ENCODE measurements at regions of chr1 and their contacts with region 1.

Region 1: DNA sequence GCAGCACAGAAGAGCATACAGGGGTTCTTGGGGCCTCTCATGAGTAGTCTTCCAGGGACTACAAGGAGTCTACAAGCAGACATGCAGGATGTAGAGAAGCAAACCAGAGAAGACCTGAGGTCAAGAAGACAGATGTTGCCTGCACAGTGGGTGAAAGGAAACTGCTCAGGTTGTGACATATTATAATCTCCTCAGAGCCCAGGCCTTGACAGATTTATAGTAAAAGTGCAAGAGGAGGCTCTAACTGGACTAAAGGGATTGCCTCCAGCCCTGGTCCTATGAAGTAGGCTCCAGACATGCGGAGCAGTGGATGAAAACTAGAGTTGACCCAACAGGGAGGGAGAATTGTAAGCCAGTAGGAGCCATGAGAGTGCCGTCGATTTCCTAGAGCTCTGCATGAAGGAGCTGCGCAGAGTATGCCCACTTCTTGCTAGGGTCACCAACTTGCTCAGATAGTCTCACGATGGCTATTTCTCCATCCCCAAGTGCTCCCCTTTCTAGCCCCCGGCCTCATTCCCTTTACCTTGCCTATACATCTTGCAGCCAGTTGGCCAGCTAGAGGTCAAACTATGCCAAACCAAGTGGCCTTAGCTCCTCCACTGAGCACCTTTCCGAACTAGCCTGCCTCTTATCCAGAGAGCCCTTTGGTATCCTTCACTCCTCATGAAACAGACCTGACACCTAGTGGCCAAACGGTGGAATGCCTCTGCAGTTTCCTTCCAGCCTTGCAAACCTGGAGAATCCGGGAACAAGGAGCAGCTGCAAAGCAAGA is 36.2 kb upstream of the IPO9 start:
- H3K4me3 ChIP-seq: no peak overlapping the region
- H3K27ac ChIP-seq: no peak overlapping the region
- H3K4me1 ChIP-seq: no peaks in the 10 kb centered on the region
- CTCF ChIP-seq: peak; percentile 92

Region 2: DNA sequence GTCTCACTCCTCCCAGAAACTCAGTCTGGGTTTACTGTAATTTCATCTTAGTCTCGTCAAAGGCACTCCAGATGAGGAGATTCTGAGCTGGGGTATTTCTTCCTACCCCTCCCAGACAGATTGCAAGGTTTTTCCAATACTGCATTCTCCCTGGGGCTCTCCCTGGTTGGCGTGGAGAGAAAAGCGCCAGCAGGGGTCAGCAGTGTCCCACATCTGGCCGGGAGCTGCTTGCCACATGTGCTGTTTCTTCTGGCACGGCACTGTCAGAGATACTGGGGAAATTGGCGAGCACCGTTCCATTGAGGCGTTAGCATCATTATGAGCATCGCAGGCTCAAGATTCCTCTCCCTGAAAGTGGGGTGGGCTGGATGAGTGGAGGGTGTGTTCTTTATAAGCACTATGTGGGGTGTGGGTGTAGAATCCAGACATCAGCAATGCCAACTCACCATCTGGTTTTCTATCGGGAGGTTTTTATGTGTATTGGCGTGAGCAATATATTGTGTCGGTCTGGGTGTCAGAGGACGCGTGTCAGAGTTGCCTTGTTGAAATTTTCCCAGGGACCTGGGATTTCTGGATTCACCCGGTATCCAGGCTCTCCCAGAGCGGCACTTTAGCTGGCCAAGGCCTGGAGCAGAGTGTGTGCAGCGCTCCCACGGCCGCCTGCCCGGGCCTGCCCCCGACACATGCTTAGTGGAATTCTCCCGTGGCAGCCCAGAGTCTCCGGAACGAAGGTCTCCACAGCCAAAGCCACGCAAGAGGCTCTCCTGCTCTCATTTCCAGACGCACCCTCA is 261.8 kb before region 1 on chr1:
- CTCF ChIA-PET with region 1: interaction called, 52 read pairs
- POLR2A ChIA-PET with region 1: no interaction called
- H3K4me3 ChIP-seq: no peak overlapping the region
- H3K27ac ChIP-seq: no peak overlapping the region
- H3K4me1 ChIP-seq: peaks cover 4% of the 10 kb centered on the region; the same call in 1 of the 2 replicates
- CTCF ChIP-seq: peak; percentile 87

Region 3: DNA sequence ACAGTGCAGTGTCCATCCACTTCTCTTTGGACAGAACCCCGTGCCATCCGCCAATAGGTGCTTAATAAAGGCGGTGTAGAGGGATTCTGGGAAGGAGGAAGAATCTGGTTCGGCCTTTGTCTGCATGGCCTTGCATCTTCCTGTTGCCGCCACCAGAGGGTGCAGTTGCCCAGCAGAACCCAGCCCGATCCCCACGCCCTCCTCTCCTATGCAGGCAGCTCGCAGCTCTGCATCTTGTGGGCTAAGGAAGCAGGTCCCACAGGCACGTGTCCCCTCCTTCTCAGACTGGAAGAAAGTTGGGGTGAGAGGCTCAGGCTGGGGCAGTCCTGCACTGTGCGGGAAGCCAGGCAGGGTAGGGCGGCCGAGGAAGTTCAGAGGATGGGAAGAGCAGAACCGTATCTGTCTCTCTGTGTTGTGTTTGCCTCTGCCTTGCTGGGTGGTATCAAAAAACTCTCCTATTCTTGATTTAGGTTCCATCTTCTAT is 233.0 kb before region 1 on chr1:
- CTCF ChIA-PET with region 1: interaction called, 120 read pairs
- POLR2A ChIA-PET with region 1: no interaction called
- H3K4me3 ChIP-seq: no peak overlapping the region
- H3K27ac ChIP-seq: no peak overlapping the region
- H3K4me1 ChIP-seq: no peaks in the 10 kb centered on the region
- CTCF ChIP-seq: peak; percentile 99

Region 4: DNA sequence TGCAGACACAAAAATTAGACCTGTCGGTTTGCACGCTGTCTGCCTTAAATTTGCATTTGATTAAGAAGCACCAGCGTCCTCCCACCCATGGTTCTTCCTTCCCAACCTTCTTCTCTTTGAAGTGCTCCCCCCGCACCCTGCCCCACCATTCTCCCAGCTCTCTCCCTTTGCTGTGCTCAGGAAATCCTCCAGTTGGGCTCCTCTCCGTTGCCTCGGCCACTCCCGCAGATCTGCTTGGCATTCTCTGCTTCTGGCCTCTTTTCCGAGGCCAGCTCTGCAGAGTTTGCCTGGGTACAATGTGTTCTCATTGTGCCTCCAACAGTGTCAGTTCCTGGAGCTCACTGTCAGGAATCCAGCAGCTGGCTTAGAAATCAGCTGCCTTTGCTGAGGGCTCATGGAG is 127.7 kb before region 1 on chr1:
- CTCF ChIA-PET with region 1: no interaction called
- POLR2A ChIA-PET with region 1: no interaction called
- H3K4me3 ChIP-seq: no peak overlapping the region
- H3K27ac ChIP-seq: no peak overlapping the region
- H3K4me1 ChIP-seq: no peaks in the 10 kb centered on the region
- CTCF ChIP-seq: no peak

Region 5: GRCh38 chr1:201719812-201720521 is 72.8 kb before region 1 on chr1:
- CTCF ChIA-PET with region 1: interaction called, 593 read pairs
- POLR2A ChIA-PET with region 1: no interaction called
- H3K4me3 ChIP-seq: no peak overlapping the region
- H3K27ac ChIP-seq: peak overlapping the region; percentile 27; the same call in 1 of the 2 replicates
- H3K4me1 ChIP-seq: peaks cover 25% of the 10 kb centered on the region
- CTCF ChIP-seq: no peak

Region 6: GRCh38 chr1:201739492-201740085 is 53.1 kb before region 1 on chr1:
- CTCF ChIA-PET with region 1: interaction called, 17 read pairs
- POLR2A ChIA-PET with region 1: no interaction called
- H3K4me3 ChIP-seq: peak overlapping the region; percentile 67
- H3K27ac ChIP-seq: no peak overlapping the region; the same call in 1 of the 2 replicates
- H3K4me1 ChIP-seq: peaks cover 3% of the 10 kb centered on the region; the same call in 1 of the 2 replicates
- CTCF ChIP-seq: peak; percentile 21; the same call in 1 of the 2 replicates

Region 7: DNA sequence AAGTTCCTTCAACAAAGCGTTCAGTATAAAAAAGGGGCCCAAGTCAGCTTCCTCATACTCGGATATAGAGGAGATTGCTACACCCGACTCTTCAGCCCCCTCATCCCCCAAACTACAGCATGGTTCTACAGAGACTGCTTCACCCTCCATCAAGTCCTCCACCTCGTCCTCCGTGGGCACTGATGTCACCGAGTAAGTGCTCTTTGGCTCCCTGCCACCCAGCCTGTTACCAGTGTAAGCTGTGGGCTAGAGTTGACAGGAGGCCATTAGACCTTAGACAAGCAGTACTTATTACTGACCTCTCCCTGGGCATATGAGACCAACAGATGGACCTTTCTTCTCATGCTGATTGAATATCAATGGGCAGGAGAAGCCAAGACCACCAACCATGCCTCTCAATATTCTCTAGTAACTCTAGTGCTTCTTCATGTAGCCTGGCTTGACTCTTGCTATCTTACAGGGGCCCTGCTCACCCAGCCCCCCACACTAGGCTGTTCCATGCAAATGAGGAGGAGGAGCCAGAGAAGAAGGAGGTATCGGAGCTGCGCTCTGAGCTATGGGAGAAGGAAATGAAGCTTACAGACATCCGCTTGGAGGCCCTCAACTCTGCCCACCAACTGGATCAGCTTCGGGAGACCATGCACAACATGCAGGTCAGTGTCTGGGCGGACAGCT is 15.4 kb after region 1 on chr1:
- CTCF ChIA-PET with region 1: interaction called, 28 read pairs
- POLR2A ChIA-PET with region 1: no interaction called
- H3K4me3 ChIP-seq: no peak overlapping the region
- H3K27ac ChIP-seq: no peak overlapping the region
- H3K4me1 ChIP-seq: no peaks in the 10 kb centered on the region
- CTCF ChIP-seq: no peak

Region 8: DNA sequence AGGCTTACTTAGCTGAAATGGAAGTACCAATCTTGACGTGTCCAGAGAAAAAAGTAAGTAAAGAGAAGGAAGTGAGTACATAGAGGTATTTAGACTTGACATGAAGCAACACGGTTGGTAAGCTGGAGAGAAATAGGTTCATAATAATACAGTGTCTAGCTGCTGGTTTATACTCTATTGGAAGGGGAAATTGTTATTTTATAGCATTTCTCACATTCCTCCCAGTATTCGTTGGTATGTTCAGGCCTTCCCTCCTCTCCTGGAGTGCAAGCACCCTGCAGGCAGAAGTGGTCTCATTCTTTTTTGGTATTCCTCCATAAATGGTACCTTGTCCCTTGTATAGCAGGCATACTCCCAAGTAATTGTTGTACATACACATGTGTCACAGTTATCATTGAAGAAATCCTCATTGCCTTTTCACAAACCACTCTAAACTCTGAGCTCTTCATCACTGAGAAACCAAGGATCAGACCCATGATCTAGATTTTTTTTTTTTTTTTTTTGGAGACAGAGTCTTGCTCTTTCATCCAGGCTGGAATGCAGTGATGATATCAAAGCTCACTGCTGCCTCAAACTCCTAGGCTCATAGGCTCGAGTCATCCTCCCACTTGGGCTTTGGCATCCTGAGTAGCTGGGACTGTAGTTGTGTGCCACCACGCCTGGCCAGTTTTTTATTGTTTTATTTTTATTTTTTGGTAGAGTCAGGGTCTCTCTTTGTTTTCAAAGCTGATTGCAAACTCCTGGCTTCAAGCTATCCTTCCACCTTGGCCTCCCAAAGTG is 26.4 kb after region 1 on chr1:
- CTCF ChIA-PET with region 1: interaction called, 28 read pairs
- POLR2A ChIA-PET with region 1: no interaction called
- H3K4me3 ChIP-seq: no peak overlapping the region
- H3K27ac ChIP-seq: no peak overlapping the region
- H3K4me1 ChIP-seq: no peaks in the 10 kb centered on the region
- CTCF ChIP-seq: no peak

Measured in HEK293 (cell line).